Activated CD4-positive, alpha-beta T cell treated with anti-CD3 and anti-CD28 coated beads, Interleukin-2, amount 10 ng/mL, durations not matched to agents 7 days and 5 days (primary cell): ENCODE measurements at regions of chr12 and their contacts with region 1.

Region 1: DNA sequence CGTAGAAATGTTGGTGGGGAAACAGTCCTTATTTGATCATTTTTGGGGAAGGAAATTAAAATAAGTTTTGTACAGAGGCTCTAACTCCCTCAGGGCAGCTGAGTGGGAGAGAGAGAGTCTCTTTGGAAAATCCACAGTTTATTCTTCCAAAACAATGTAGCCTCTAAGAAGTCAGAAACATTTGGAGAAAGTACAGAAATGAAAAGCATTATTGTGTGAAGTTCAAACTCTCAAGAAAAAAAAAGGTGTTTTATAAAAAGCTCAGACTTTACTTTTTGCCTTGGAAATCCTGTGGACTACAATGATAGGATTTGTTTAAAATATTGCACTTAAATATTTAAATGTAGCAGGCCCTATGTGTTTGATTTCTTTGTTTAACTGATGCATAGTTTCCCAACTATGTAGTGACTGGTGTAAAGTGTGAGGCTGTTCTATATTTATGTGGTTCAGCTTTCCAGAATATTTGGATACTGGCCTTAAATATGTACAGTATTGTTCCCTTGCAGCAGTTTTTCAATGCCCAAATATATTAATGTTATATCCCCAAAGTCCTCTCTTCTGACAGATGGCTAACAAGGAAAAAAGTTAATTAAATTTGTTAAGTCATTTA is 82.0 kb upstream of the OTOGL start:
- DNase-seq: no peak
- H3K4me3 Mint-ChIP-seq: no peak overlapping the region
- H3K27ac Mint-ChIP-seq: no peak overlapping the region
- H3K4me1 Mint-ChIP-seq: no peaks in the 10 kb centered on the region
- H3K27me3 Mint-ChIP-seq: no peaks in the 10 kb centered on the region

Region 2: GRCh38 chr12:80001264-80001961 is 16.0 kb before region 1 on chr12:
- CTCF ChIA-PET with region 1: no interaction called
- POLR2A ChIA-PET with region 1: no interaction called
- DNase-seq: no peak
- H3K4me3 Mint-ChIP-seq: no peak overlapping the region
- H3K27ac Mint-ChIP-seq: no peak overlapping the region
- H3K4me1 Mint-ChIP-seq: no peaks in the 10 kb centered on the region
- H3K27me3 Mint-ChIP-seq: peaks cover 3% of the 10 kb centered on the region

Region 3: GRCh38 chr12:80219345-80219744 is 202.0 kb after region 1 on chr12:
- CTCF ChIA-PET with region 1: no interaction called
- POLR2A ChIA-PET with region 1: interaction called, 10 read pairs
- DNase-seq: no peak
- H3K4me3 Mint-ChIP-seq: no peak overlapping the region
- H3K27ac Mint-ChIP-seq: no peak overlapping the region
- H3K4me1 Mint-ChIP-seq: no peaks in the 10 kb centered on the region
- H3K27me3 Mint-ChIP-seq: peaks cover 1% of the 10 kb centered on the region